Activated CD4-positive, alpha-beta T cell treated with anti-CD3 and anti-CD28 coated beads for 36 hours (primary cell): ENCODE measurements at regions of chr2 and their contacts with region 1.

Region 1: DNA sequence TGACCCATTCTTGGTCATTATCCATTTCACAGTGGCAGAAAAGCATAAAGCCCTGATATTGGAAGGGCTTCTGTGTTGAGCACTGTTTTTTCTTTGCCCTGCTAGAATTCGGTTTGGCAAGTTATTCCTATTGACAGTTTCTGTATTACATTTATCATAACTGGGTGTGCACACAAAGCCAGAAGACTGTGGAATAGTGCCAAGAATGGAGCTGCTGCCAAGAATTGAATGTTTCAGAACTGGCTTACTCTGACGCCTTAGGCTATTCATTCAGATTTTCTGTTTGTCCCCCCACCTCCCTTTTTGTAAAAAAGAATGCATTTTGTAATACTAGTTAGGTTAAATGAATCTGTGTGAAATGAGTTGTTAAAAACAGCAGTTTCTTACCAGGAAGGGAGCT is 12.7 kb downstream of the KDM3A start:
- DNase-seq: no peak
- ATAC-seq: no peak
- H3K4me3 Mint-ChIP-seq: no peak overlapping the region
- H3K27ac Mint-ChIP-seq: no peak overlapping the region
- H3K4me1 Mint-ChIP-seq: peaks cover 31% of the 10 kb centered on the region
- H3K27me3 Mint-ChIP-seq: no peaks in the 10 kb centered on the region

Region 2: GRCh38 chr2:86372641-86373503 is 81.0 kb before region 1 on chr2:
- CTCF ChIA-PET with region 1: no interaction called
- POLR2A ChIA-PET with region 1: no interaction called
- intact Hi-C with region 1: no loop called
- DNase-seq: peak; percentile 18
- ATAC-seq: no peak
- H3K4me3 Mint-ChIP-seq: no peak overlapping the region
- H3K27ac Mint-ChIP-seq: peak overlapping the region; percentile 55
- H3K4me1 Mint-ChIP-seq: peaks cover 42% of the 10 kb centered on the region
- H3K27me3 Mint-ChIP-seq: no peaks in the 10 kb centered on the region

Region 3: DNA sequence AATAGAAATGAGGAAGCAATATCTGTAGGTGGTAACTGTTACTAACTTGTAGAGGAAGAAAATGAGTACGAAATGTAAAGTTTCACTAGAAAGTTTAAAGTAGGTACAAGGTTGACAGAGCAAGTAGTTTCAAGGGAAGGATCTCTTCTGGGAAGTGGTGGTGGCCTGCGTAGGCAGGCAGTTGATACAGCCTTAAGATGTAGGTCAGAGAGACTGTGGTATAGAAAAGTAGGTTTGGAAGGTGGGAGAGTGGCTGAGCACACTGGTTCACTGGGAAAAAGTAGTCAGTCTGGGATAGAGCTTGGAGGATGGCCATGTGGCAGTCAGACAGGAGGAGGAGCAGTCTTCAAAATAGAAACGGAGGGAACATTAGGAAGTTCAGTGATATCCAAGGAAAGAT is 10.8 kb after region 1 on chr2:
- CTCF ChIA-PET with region 1: interaction called, 3 read pairs
- POLR2A ChIA-PET with region 1: no interaction called
- intact Hi-C with region 1: loop called in 1 of 2 experiments (anchors 2 kb)
- DNase-seq: peak; percentile 33
- ATAC-seq: peak; percentile 49
- H3K4me3 Mint-ChIP-seq: no peak overlapping the region
- H3K27ac Mint-ChIP-seq: peak overlapping the region; percentile 43
- H3K4me1 Mint-ChIP-seq: peaks cover 32% of the 10 kb centered on the region
- H3K27me3 Mint-ChIP-seq: no peaks in the 10 kb centered on the region